Aorta (tissue), 5 donors: ENCODE measurements at regions of chr1 and their contacts with region 1.

Region 1: GRCh38 chr1:77832901-77833300 is 53.5 kb downstream of the MIGA1 start:
- DNase-seq: no peak
- ATAC-seq: peak; percentile 87
- H3K4me3 ChIP-seq: no peak overlapping the region
- H3K27ac ChIP-seq: peak overlapping the region in 1 of 2 donors; percentile 67
- H3K4me1 ChIP-seq: peaks cover 3 to 5% of the 10 kb centered on the region in 2 donors
- H3K27me3 ChIP-seq: no peaks in the 10 kb centered on the region

Region 2: GRCh38 chr1:77888081-77888780 is 55.3 kb after region 1 on chr1 and contains the start of gene NEXN:
- intact Hi-C with region 1: loop called (anchors 5 kb)
- DNase-seq: peak; percentile 87 to 94
- ATAC-seq: peak; percentile 90
- H3K4me3 ChIP-seq: peak within 1 kb of the TSS; percentile 93 to 97
- H3K27ac ChIP-seq: peak within 1 kb of the TSS; percentile 96 to 100
- H3K4me1 ChIP-seq: no peaks in the 10 kb centered on the region
- H3K27me3 ChIP-seq: no peaks in the 10 kb centered on the region
- total RNA-seq, gene NEXN: 81.9 to 237 TPM

Region 3: DNA sequence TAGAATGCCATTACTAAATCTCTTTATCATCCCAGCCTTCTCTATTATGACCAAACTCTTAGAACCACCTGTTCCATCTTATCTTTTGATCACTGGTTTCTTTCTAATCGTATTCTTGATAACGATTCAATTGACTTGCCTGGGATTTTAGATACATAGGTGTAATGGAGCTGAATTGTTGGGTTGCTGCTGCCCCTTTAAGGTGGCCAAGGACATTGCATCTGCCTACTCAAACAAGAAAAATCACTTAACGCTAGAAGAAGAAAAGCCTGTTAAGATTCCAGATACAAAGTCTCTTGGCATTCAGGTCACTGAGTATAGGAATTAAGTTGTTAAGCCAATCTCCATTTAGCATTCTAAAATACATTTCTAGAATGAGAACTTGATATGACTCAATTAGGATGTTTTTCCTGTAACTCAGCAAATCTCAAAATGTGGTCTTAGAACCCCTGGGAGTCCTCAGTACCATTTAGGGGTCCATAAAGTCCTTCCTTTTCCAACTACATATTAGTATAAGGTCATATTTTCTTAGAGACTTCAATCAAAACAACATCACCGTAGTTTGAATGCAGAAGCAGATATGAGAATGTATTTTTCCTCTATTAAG is 67.9 kb after region 1 on chr1:
- intact Hi-C with region 1: no loop called
- DNase-seq: no peak
- ATAC-seq: peak; percentile 71
- H3K4me3 ChIP-seq: peak overlapping the region; percentile 34 to 36
- H3K27ac ChIP-seq: no peak overlapping the region
- H3K4me1 ChIP-seq: peaks cover 3 to 4% of the 10 kb centered on the region in 2 donors
- H3K27me3 ChIP-seq: no peaks in the 10 kb centered on the region

Region 4: DNA sequence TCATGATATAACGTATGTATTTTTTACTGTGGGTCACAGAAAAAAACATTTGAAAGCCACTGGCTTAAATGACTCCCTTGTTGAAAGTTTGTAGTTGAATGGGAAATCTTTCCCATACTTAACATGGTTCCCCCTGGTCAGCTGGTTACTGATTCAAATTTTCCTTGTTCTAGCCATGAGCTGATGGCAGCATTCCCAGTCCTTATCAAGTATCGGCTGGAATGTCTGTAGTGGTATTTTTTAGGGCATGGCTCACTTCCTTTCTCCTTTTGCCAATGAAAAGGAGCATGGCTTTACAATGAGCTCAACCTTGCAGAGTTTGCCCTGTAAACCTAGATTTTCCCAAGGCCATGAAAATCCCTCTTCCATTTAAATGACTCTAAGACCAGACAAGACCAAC is 268.6 kb after region 1 on chr1:
- intact Hi-C with region 1: loop called in 1 of 2 experiments (anchors 10 kb)
- DNase-seq: peak in 1 of 2 donors; percentile 55
- ATAC-seq: peak; percentile 85
- H3K4me3 ChIP-seq: no peak overlapping the region
- H3K27ac ChIP-seq: peak overlapping the region in 1 of 2 donors; percentile 43
- H3K4me1 ChIP-seq: peaks cover 3 to 16% of the 10 kb centered on the region in 2 donors
- H3K27me3 ChIP-seq: no peaks in the 10 kb centered on the region